ENCODE measurements at regions of chr13 and their contacts with region 1.

Region 1: GRCh38 chr13:51452361-51453206 is at the start of gene INTS6:
- DNase-seq: peak; percentile 98 to 100 (median 100)
- H3K4me3 ChIP-seq: peak within 1 kb of the TSS; percentile 62 to 82
- H3K4me3 Mint-ChIP-seq: peak within 1 kb of the TSS; percentile 89 to 96 (median 94)
- H3K27ac ChIP-seq: peak within 1 kb of the TSS; percentile 97
- H3K27ac Mint-ChIP-seq: peak within 1 kb of the TSS; percentile 94 to 99 (median 98)
- H3K4me1 ChIP-seq: peaks cover 42% of the 10 kb centered on the region
- H3K4me1 Mint-ChIP-seq: peaks cover 34 to 65% (median 40%) of the 10 kb centered on the region in 4 donors
- H3K27me3 ChIP-seq: no peaks in the 10 kb centered on the region
- H3K27me3 Mint-ChIP-seq: peaks cover 0 to 1% of the 10 kb centered on the region in 2 donors
- total RNA-seq, gene INTS6: 55.7 to 65.6 TPM

Region 2: DNA sequence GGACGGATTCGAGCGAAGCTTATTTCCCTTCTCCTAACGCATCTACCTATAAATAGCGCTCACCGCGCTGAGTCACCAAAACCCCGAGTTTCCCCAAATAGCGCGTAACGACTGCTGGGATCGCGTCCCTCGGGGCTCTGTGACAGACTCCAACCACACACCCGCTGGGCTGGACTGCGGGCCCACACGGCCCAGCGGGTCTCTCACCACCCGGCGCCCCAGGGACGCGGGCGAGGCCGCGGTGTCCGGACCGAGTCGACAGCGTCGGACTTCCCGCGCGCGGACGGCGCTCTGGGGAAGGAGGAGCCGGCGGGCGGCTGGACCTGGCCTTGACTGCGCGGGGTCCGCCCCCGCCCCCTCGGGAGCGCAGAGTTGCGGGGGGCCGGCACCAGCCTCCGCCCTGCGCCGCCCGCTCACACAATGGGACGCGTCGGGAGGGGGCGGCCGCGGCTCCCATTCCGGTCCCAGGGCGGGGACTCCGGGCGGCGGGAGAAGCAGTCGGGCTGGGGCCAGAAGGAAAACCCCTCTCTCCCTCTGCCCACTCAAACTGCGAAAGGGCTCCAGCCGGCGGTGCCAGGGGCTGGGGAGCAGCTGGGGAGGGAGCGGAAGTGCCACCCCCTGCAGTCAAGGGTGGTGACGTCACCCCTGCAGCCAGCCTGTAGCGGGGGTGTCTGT is 1328.6 kb before region 1 on chr13:
- CTCF ChIA-PET with region 1: no interaction called
- POLR2A ChIA-PET with region 1: interaction called, 8 read pairs
- intact Hi-C with region 1: loop called (anchors 10 kb)
- DNase-seq: peak in 4 of 5 donors; percentile 67 to 93 (median 74)
- H3K4me3 ChIP-seq: peak overlapping the region; percentile 48 to 92
- H3K4me3 Mint-ChIP-seq: peak overlapping the region; percentile 84 to 97 (median 91)
- H3K27ac ChIP-seq: peak overlapping the region; percentile 98
- H3K27ac Mint-ChIP-seq: peak overlapping the region; percentile 94 to 99 (median 97)
- H3K4me1 ChIP-seq: peaks cover 64% of the 10 kb centered on the region
- H3K4me1 Mint-ChIP-seq: peaks cover 36 to 70% (median 55%) of the 10 kb centered on the region in 4 donors
- H3K27me3 ChIP-seq: no peaks in the 10 kb centered on the region
- H3K27me3 Mint-ChIP-seq: peaks cover 3 to 10% of the 10 kb centered on the region in 2 donors

Region 3: GRCh38 chr13:51534041-51534817 is 81.6 kb after region 1 on chr13:
- CTCF ChIA-PET with region 1: interaction called, 4 read pairs
- POLR2A ChIA-PET with region 1: interaction called, 45 read pairs
- intact Hi-C with region 1: loop called (anchors 5 kb)
- DNase-seq: peak; percentile 21 to 58 (median 27)
- H3K4me3 ChIP-seq: no peak overlapping the region
- H3K4me3 Mint-ChIP-seq: peak overlapping the region in 7 of 8 donors; percentile 48 to 84 (median 67)
- H3K27ac ChIP-seq: peak overlapping the region; percentile 31
- H3K27ac Mint-ChIP-seq: peak overlapping the region; percentile 53 to 88 (median 75)
- H3K4me1 ChIP-seq: peaks cover 32% of the 10 kb centered on the region
- H3K4me1 Mint-ChIP-seq: peaks cover 17 to 35% (median 26%) of the 10 kb centered on the region in 4 donors
- H3K27me3 ChIP-seq: no peaks in the 10 kb centered on the region
- H3K27me3 Mint-ChIP-seq: no peaks in the 10 kb centered on the region

Region 4: DNA sequence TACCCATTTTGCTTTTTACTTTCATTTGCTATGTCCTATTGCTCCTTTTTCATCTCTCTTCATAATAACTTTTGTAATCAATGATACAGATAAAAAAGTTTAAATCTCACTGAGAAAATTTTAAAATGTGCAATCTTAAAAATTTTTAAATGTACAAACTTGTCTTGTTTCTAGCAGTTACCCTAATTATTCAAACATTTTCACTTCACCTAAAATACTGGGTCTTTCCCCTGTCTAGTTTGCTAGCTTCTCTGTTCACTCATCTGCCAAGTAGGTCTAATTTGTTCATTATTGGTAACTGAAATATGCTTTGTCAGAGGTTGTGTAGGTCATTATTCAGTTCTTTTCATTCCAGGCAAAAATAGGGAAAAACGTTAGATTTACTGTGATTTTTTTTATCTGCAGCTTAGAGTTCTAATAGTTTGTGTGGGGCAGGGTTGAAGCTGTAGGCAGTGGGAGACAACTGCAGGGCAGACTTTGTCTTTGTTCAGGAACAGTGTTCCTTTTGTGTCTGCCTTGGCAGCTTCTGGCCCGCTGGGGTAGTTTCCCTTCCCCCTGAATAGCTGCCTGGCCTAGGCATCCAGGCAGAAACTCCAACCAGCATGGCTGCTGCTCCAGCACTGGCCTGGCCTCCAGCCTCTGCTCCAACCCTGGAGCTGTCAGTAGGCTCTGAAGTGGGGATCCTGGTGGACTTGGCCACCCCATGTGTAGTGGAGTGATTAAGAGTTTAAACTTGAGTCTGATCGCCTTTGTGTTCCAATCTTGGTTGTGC is 180.2 kb after region 1 on chr13:
- CTCF ChIA-PET with region 1: no interaction called
- POLR2A ChIA-PET with region 1: interaction called, 17 read pairs
- intact Hi-C with region 1: no loop called
- DNase-seq: no peak
- H3K4me3 ChIP-seq: no peak overlapping the region
- H3K4me3 Mint-ChIP-seq: peak overlapping the region in 3 of 8 donors; percentile 4 to 43 (median 16)
- H3K27ac ChIP-seq: no peak overlapping the region
- H3K27ac Mint-ChIP-seq: peak overlapping the region in 4 of 7 donors; percentile 9 to 65 (median 60)
- H3K4me1 ChIP-seq: peaks cover 26% of the 10 kb centered on the region
- H3K4me1 Mint-ChIP-seq: peaks cover 46 to 72% (median 52%) of the 10 kb centered on the region in 4 donors
- H3K27me3 ChIP-seq: no peaks in the 10 kb centered on the region
- H3K27me3 Mint-ChIP-seq: no peaks in the 10 kb centered on the region

Region 5: GRCh38 chr13:51714663-51715168 is 262.1 kb after region 1 on chr13:
- CTCF ChIA-PET with region 1: no interaction called
- POLR2A ChIA-PET with region 1: no interaction called
- intact Hi-C with region 1: no loop called
- DNase-seq: no peak
- H3K4me3 ChIP-seq: no peak overlapping the region
- H3K4me3 Mint-ChIP-seq: no peak overlapping the region
- H3K27ac ChIP-seq: no peak overlapping the region
- H3K27ac Mint-ChIP-seq: no peak overlapping the region
- H3K4me1 ChIP-seq: no peaks in the 10 kb centered on the region
- H3K4me1 Mint-ChIP-seq: peaks cover 0 to 4% (median 1%) of the 10 kb centered on the region in 4 donors
- H3K27me3 ChIP-seq: no peaks in the 10 kb centered on the region
- H3K27me3 Mint-ChIP-seq: no peaks in the 10 kb centered on the region

Region 6: DNA sequence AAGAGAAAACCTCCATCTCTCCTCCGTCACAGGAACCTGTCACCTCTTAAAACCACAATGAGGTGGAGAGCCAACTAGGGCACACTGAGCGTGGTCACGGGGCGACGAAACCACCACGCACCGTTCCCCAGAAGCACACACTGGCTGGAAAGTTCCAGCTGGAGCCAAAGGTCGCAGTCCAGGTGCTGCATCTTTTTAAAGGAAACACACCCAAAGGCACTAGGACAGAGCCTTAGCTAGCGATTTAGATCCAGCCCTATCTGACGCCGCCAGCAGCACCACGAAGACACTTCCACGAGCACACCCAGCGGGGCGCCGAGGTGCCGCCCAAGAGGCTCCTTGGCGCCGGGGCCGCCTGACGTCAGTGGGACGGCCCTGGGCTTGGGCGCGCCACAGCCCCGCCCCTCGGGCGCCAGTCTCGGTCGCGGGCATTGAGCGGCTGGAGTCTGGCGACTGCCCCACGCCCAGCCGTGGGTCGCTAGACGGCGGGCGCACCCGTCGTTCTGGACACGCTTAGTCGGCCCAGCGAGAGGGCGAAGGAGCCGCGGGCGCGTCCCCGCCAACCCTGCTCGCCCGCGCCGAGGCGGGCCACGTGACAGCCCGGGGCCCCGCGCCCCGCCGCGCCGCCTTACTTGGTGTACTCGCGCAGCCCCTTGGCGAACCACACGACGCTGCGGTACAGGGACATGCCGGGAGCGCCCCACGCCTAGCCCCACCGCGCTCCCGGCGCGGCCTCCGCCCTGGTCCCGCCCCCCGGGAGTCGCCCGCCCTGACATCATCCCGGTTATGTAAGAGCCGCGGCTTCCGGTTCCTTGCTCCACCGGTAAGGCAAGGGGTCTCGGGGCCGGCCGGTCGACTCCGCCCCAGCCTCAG is 351.1 kb after region 1 on chr13 and contains the start of gene DHRS12:
- CTCF ChIA-PET with region 1: interaction called, 22 read pairs
- POLR2A ChIA-PET with region 1: interaction called, 220 read pairs
- intact Hi-C with region 1: loop called (anchors 1 kb)
- DNase-seq: peak; percentile 92 to 96 (median 95)
- H3K4me3 ChIP-seq: peak within 1 kb of the TSS; percentile 76 to 88
- H3K4me3 Mint-ChIP-seq: peak within 1 kb of the TSS; percentile 91 to 98 (median 96)
- H3K27ac ChIP-seq: peak within 1 kb of the TSS; percentile 96
- H3K27ac Mint-ChIP-seq: peak within 1 kb of the TSS; percentile 98 to 100 (median 100)
- H3K4me1 ChIP-seq: peaks cover 45% of the 10 kb centered on the region
- H3K4me1 Mint-ChIP-seq: peaks cover 34 to 59% (median 47%) of the 10 kb centered on the region in 4 donors
- H3K27me3 ChIP-seq: no peaks in the 10 kb centered on the region
- H3K27me3 Mint-ChIP-seq: no peaks in the 10 kb centered on the region
- total RNA-seq, gene DHRS12: 23.6 to 24.3 TPM

Region 7: DNA sequence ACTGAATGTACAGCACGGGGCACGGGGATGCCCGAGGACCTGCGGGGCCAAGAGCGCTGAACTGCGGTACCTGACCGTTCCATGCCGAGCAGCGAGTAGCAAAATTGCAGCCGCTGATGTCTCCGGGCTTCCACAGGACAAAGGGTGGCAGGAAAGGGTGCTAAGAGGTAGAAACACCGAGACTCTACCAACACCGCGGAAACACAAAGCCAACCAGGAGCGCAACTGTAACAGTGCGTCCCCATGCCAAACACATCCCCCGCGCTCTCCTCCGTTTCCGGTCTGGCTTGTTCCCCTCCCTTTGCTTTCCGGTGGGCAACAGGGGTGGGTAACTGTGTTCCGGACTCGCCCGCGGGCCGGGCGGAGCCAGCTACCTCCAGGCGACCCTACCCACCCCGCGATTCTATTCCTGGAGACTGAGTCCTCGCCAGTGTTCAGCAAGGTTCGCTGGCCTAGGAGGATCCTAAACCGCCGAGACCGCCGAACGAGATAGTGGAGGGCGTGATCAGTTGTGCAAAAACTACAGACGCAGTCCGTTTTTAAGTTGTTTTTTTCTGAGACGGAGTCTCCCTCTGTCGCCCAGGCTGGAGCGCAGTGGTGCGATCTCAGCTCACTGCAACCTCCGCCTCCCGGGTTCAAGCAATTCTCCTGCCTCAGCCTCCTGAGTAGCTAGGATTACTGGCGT is 741.7 kb after region 1 on chr13:
- CTCF ChIA-PET with region 1: no interaction called
- POLR2A ChIA-PET with region 1: interaction called, 9 read pairs
- intact Hi-C with region 1: loop called (anchors 1 kb)
- DNase-seq: peak; percentile 84 to 88 (median 85)
- H3K4me3 ChIP-seq: peak overlapping the region; percentile 82 to 94
- H3K4me3 Mint-ChIP-seq: peak overlapping the region; percentile 96 to 99 (median 98)
- H3K27ac ChIP-seq: peak overlapping the region; percentile 68
- H3K27ac Mint-ChIP-seq: peak overlapping the region; percentile 94 to 99 (median 97)
- H3K4me1 ChIP-seq: peaks cover 27% of the 10 kb centered on the region
- H3K4me1 Mint-ChIP-seq: peaks cover 23 to 41% (median 35%) of the 10 kb centered on the region in 4 donors
- H3K27me3 ChIP-seq: no peaks in the 10 kb centered on the region
- H3K27me3 Mint-ChIP-seq: no peaks in the 10 kb centered on the region